GM12878 (cell line): ENCODE measurements at regions of chr15 and their contacts with region 1.

Region 1: GRCh38 chr15:75201609-75202250 is at the start of gene C15orf39:
- DNase-seq: no peak
- ATAC-seq: peak; percentile 55
- H3K4me3 ChIP-seq: peak within 1 kb of the TSS; percentile 88
- H3K27ac ChIP-seq: peak within 1 kb of the TSS; percentile 98
- H3K4me1 ChIP-seq: peaks cover 38% of the 10 kb centered on the region
- H3K27me3 ChIP-seq: no peaks in the 10 kb centered on the region
- CTCF ChIP-seq: peak; percentile 63 to 71 (median 65); a peak in 5 of 6 replicates
- EP300 ChIP-seq: no peak
- POLR2A ChIP-seq: peak; percentile 84
- RAD21 ChIP-seq: peak; percentile 42
- polyA plus RNA-seq, gene C15orf39: 2.3 to 4.9 TPM

Region 2: DNA sequence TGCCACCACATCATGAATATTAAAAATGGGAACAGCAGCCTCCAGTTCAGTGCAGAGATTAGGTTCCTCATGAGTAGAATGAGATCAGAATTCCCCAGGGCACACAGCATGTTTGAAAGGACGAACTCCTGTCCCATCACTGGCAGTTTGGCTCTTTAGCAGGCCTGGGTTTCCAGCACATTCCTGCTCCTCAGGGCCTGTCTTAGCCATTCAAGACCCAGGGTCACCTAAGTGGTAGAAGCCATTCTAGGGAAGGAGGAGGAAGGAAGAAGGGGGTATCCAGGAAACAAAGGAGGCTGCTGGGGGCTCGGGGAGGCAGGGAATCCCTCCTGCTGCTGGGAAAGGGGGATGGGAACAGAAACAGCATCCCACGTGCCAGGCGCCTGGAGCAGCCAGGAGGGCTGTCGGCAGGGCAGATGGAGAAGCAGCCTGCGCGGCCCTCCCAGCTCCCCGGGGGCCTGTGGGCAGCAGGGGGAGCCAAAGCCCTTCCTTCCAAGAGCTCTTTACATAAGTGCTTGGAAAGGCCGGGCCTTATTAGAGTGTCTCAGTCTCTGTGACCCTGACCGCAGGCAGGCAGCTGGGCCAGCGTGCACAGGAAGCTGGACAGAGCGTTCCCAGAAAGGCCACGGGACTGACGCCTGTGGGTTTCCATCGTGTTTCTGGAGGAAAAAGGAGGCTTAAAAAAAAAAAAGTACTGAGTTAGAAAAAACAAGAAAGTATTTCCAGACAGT is 1250.7 kb before region 1 on chr15:
- CTCF ChIA-PET with region 1: no interaction called
- POLR2A ChIA-PET with region 1: no interaction called
- RAD21 ChIA-PET with region 1: no interaction called
- SMC1A ChIA-PET with region 1: no interaction called
- in situ Hi-C with region 1: no loop called
- intact Hi-C with region 1: no loop called
- DNase-seq: no peak
- ATAC-seq: peak; percentile 97
- H3K4me3 ChIP-seq: no peak overlapping the region
- H3K27ac ChIP-seq: no peak overlapping the region
- H3K4me1 ChIP-seq: no peaks in the 10 kb centered on the region
- H3K27me3 ChIP-seq: no peaks in the 10 kb centered on the region; a peak in 1 of 4 replicates
- CTCF ChIP-seq: peak; percentile 63 to 77 (median 72)
- EP300 ChIP-seq: no peak
- POLR2A ChIP-seq: no peak
- RAD21 ChIP-seq: peak; percentile 74

Region 3: GRCh38 chr15:75023181-75023871 is 178.4 kb before region 1 on chr15 and contains the start of gene PPCDC:
- CTCF ChIA-PET with region 1: interaction called, 95 read pairs
- POLR2A ChIA-PET with region 1: interaction called, 15 read pairs
- RAD21 ChIA-PET with region 1: interaction called, 28 read pairs
- SMC1A ChIA-PET with region 1: interaction called, 21 read pairs
- in situ Hi-C with region 1: no loop called
- intact Hi-C with region 1: no loop called
- DNase-seq: peak; percentile 84
- ATAC-seq: peak; percentile 99
- H3K4me3 ChIP-seq: peak within 1 kb of the TSS; percentile 86
- H3K27ac ChIP-seq: peak within 1 kb of the TSS; percentile 98
- H3K4me1 ChIP-seq: peaks cover 16% of the 10 kb centered on the region
- H3K27me3 ChIP-seq: no peaks in the 10 kb centered on the region
- CTCF ChIP-seq: no peak
- EP300 ChIP-seq: no peak
- POLR2A ChIP-seq: peak; percentile 99
- RAD21 ChIP-seq: no peak
- polyA plus RNA-seq, gene PPCDC: 92.0 to 135 TPM

Region 4: DNA sequence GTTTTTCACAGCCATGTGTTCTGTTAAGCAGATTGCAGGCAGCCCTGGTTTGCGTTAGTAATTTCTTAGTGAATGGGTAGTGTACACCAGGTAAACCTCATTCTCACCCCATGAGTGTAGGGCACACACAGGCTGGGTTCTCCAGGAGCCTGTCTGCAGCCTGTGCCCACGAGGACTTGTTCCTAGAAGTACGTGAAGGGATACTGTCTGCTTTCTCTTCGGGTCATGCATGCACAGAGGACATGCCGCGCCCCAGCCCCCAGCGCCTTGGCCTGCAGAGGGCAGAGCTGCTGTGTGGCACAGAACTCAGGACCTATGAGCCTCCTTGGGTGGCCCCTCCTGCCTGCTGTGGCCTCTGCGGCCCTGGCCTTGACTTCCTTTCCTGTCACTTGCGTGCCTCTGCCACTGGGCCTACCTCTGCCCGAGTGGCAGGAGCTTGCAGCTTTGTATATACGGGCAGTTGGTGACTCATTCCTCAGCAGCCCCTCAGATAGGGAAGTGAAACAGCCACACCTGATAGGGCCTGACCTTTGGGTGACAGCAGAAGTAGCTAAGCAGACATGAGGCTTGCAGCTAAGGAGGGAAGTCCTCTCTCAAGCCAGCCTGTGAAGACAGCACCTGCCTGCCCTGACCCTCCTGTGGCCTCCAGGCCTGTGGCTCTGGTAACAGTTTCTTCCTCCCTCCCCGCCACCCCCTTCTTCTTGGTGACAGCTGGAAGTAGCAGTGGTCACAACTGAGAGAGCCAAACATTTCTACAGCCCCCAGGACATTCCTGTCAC is 158.8 kb before region 1 on chr15:
- CTCF ChIA-PET with region 1: interaction called, 73 read pairs
- POLR2A ChIA-PET with region 1: interaction called, 51 read pairs
- RAD21 ChIA-PET with region 1: interaction called, 28 read pairs
- SMC1A ChIA-PET with region 1: interaction called, 7 read pairs
- in situ Hi-C with region 1: no loop called
- intact Hi-C with region 1: loop called (anchors 1 kb)
- DNase-seq: peak; percentile 100
- ATAC-seq: peak; percentile 79
- H3K4me3 ChIP-seq: peak overlapping the region; percentile 50; the same call in 1 of the 2 replicates
- H3K27ac ChIP-seq: peak overlapping the region; percentile 100
- H3K4me1 ChIP-seq: peaks cover 65% of the 10 kb centered on the region
- H3K27me3 ChIP-seq: no peaks in the 10 kb centered on the region
- CTCF ChIP-seq: peak; percentile 77 to 89 (median 89)
- EP300 ChIP-seq: peak; percentile 99
- POLR2A ChIP-seq: peak; percentile 90
- RAD21 ChIP-seq: peak; percentile 81

Region 5: GRCh38 chr15:75097937-75098336 is 103.8 kb before region 1 on chr15:
- CTCF ChIA-PET with region 1: interaction called, 9 read pairs
- POLR2A ChIA-PET with region 1: interaction called, 16 read pairs
- RAD21 ChIA-PET with region 1: interaction called, 36 read pairs
- SMC1A ChIA-PET with region 1: interaction called, 22 read pairs
- in situ Hi-C with region 1: no loop called
- intact Hi-C with region 1: loop called (anchors 2 kb)
- DNase-seq: no peak
- ATAC-seq: no peak
- H3K4me3 ChIP-seq: no peak overlapping the region
- H3K27ac ChIP-seq: no peak overlapping the region
- H3K4me1 ChIP-seq: peaks cover 20% of the 10 kb centered on the region
- H3K27me3 ChIP-seq: no peaks in the 10 kb centered on the region
- CTCF ChIP-seq: no peak
- EP300 ChIP-seq: no peak
- POLR2A ChIP-seq: no peak
- RAD21 ChIP-seq: no peak

Region 6: DNA sequence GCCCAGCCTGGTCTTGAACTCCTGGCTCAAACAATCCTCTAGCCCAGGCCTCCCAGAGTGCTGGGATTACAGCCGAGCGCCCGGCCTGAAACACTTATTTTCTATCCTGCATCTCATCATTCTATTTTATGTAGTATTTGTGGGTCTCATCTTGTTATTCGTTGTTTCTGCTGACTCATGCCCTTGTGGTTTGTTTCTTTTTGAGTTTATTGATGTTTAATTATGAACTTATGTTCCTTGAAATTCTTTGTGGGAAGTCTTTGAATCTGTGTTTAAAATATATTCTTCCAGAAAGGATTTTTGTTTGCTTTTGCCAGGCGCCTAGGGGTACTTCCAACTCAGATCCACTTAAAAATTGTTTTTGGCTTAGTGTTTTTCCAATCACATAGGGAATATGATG is 78.3 kb before region 1 on chr15:
- CTCF ChIA-PET with region 1: interaction called, 36 read pairs
- POLR2A ChIA-PET with region 1: interaction called, 25 read pairs
- RAD21 ChIA-PET with region 1: interaction called, 34 read pairs
- SMC1A ChIA-PET with region 1: interaction called, 43 read pairs
- in situ Hi-C with region 1: no loop called
- intact Hi-C with region 1: no loop called
- DNase-seq: no peak
- ATAC-seq: no peak
- H3K4me3 ChIP-seq: no peak overlapping the region
- H3K27ac ChIP-seq: peak overlapping the region; percentile 41
- H3K4me1 ChIP-seq: peaks cover 41% of the 10 kb centered on the region
- H3K27me3 ChIP-seq: no peaks in the 10 kb centered on the region
- CTCF ChIP-seq: no peak
- EP300 ChIP-seq: no peak
- POLR2A ChIP-seq: no peak
- RAD21 ChIP-seq: no peak